HCT116 (cell line): ENCODE measurements at regions of chr5 and their contacts with region 1.

Region 1: DNA sequence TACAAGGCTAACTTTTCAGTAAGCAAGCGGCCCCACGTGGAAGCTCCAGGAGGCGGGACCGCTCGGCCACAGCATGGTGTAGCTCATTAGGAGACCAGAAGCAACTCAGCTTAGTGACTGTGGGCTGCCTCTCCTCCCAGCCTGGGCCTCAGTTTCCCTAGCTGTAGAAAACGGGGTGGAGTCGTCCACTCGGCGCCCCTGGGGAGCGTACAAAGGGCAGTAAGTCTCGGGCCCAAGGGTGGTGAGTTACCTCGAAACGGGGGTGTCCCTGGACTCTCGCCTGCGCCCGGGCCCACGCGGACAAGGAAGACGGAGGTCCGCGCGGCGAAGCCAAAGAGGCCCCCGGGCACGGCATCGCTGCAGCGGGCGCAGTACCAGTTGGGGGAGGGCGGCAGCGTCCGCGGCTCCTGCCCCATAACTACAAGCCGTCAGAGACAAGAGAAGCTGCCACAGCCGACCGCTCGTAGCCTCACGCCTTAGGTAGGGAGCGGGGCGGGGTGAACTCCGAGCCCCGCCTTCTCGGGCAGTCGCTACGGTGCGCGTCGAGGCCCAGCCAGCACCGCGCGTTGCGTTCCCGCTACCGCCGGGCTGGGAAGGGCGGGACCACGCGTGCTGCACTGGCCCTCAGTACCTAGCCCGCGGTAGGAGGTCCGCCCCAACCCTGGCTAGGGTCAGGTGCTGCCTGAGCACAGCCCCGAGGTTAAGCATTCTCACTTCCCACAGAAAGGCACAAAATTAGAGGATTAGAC is at the start of gene GEMIN5:
- DNase-seq: peak; percentile 77
- ATAC-seq: peak; percentile 89
- H3K4me3 ChIP-seq: peak within 1 kb of the TSS; percentile 92 to 98
- H3K27ac ChIP-seq: peak within 1 kb of the TSS; percentile 46
- H3K4me1 ChIP-seq: peaks cover 9 to 21% of the 10 kb centered on the region in 2 experiments
- H3K27me3 ChIP-seq: no peaks in the 10 kb centered on the region
- CTCF ChIP-seq: no peak
- POLR2A ChIP-seq: peak; percentile 64
- RAD21 ChIP-seq: no peak; the same call in 1 of the 2 replicates
- total RNA-seq, gene GEMIN5: 35.9 TPM

Region 2: DNA sequence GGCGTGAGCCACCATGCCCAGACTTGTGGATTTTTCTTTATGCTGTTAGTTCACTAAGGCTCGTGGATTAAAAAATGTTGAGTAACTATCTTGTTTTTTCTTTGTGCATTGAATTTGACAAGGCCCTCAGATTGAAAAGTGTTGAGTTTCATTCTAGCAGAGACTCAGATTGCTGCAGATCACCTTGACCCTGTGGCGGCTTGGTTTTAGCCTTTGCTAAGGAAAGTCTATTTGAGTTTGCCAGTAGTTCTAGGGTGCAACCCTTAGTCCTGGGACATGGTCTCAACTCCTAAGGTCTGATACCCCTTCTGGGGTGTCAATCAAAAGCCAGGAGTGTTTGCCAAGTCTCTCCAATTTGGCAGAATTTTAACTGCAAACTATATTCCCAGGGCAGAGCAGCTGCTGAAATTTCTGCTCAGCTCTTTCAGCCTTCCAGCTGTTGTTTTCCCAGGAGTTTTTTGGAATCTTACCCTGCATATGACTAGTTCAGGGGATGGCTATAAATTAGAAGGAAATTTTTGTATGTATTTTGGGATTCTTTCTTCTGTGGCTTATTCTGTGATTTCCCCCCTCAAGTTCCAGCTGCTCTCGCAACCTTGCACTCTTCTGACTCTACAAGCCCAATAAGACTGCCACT is 375.5 kb before region 1 on chr5:
- CTCF ChIA-PET with region 1: no interaction called
- POLR2A ChIA-PET with region 1: no interaction called
- RAD21 ChIA-PET with region 1: no interaction called
- intact Hi-C with region 1: no loop called
- DNase-seq: no peak
- ATAC-seq: no peak
- H3K4me3 ChIP-seq: no peak overlapping the region
- H3K27ac ChIP-seq: no peak overlapping the region
- H3K4me1 ChIP-seq: no peaks in the 10 kb centered on the region
- H3K27me3 ChIP-seq: no peaks in the 10 kb centered on the region
- CTCF ChIP-seq: no peak
- POLR2A ChIP-seq: no peak
- RAD21 ChIP-seq: no peak

Region 3: GRCh38 chr5:154654486-154655371 is 283.2 kb before region 1 on chr5:
- CTCF ChIA-PET with region 1: interaction called, 4 read pairs
- POLR2A ChIA-PET with region 1: no interaction called
- RAD21 ChIA-PET with region 1: no interaction called
- intact Hi-C with region 1: loop called (anchors 10 kb)
- DNase-seq: no peak
- ATAC-seq: no peak
- H3K4me3 ChIP-seq: no peak overlapping the region
- H3K27ac ChIP-seq: no peak overlapping the region
- H3K4me1 ChIP-seq: peaks cover 0 to 3% of the 10 kb centered on the region in 2 experiments; a peak in 1 of 4 replicates
- H3K27me3 ChIP-seq: no peaks in the 10 kb centered on the region
- CTCF ChIP-seq: no peak
- POLR2A ChIP-seq: no peak
- RAD21 ChIP-seq: no peak

Region 4: GRCh38 chr5:154949781-154950180 is 11.9 kb after region 1 on chr5:
- CTCF ChIA-PET with region 1: no interaction called
- POLR2A ChIA-PET with region 1: no interaction called
- RAD21 ChIA-PET with region 1: no interaction called
- intact Hi-C with region 1: no loop called
- DNase-seq: no peak
- ATAC-seq: no peak
- H3K4me3 ChIP-seq: no peak overlapping the region
- H3K27ac ChIP-seq: no peak overlapping the region
- H3K4me1 ChIP-seq: no peaks in the 10 kb centered on the region
- H3K27me3 ChIP-seq: no peaks in the 10 kb centered on the region
- CTCF ChIP-seq: no peak
- POLR2A ChIP-seq: no peak
- RAD21 ChIP-seq: no peak